Sigmoid colon (tissue), 7 donors: ENCODE measurements at regions of chr20 and their contacts with region 1.

Region 1: GRCh38 chr20:24651171-24651975 is 181.9 kb downstream of the SYNDIG1 start:
- DNase-seq: peak; percentile 38
- H3K4me3 ChIP-seq: no peak overlapping the region
- H3K27ac ChIP-seq: no peak overlapping the region
- H3K4me1 ChIP-seq: peaks cover 0 to 9% (median 0%) of the 10 kb centered on the region in 4 donors
- H3K27me3 ChIP-seq: no peaks in the 10 kb centered on the region
- CTCF ChIP-seq: no peak
- EP300 ChIP-seq: no peak
- POLR2A ChIP-seq: no peak

Region 2: GRCh38 chr20:24337069-24337468 is 314.3 kb before region 1 on chr20:
- intact Hi-C with region 1: no loop called
- DNase-seq: no peak
- H3K4me3 ChIP-seq: no peak overlapping the region
- H3K27ac ChIP-seq: no peak overlapping the region
- H3K4me1 ChIP-seq: no peaks in the 10 kb centered on the region
- H3K27me3 ChIP-seq: no peaks in the 10 kb centered on the region
- CTCF ChIP-seq: no peak
- EP300 ChIP-seq: no peak
- POLR2A ChIP-seq: no peak

Region 3: DNA sequence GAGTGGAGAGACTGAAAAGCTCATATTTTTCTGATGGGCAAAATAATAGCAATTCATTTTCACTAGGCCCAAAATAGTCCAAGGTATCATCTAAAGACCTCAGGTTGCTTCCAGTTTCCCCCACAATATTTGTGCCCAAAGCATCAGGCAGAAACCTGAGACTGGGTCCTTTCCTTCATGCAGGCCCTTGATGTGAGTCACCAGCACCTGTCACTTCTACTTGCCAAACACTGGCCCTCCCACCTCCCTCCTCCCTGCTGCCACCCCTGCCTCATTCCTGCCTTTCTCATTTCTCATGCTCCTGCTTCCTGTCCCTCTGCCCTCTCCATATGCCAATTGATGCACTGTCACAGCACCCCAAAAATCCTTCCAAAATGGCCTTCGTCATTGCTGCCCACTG is 67.3 kb after region 1 on chr20:
- intact Hi-C with region 1: loop called (anchors 10 kb)
- DNase-seq: no peak
- H3K4me3 ChIP-seq: no peak overlapping the region
- H3K27ac ChIP-seq: no peak overlapping the region
- H3K4me1 ChIP-seq: peaks cover 0 to 14% (median 0%) of the 10 kb centered on the region in 4 donors
- H3K27me3 ChIP-seq: no peaks in the 10 kb centered on the region
- CTCF ChIP-seq: no peak
- EP300 ChIP-seq: no peak
- POLR2A ChIP-seq: no peak

Region 4: DNA sequence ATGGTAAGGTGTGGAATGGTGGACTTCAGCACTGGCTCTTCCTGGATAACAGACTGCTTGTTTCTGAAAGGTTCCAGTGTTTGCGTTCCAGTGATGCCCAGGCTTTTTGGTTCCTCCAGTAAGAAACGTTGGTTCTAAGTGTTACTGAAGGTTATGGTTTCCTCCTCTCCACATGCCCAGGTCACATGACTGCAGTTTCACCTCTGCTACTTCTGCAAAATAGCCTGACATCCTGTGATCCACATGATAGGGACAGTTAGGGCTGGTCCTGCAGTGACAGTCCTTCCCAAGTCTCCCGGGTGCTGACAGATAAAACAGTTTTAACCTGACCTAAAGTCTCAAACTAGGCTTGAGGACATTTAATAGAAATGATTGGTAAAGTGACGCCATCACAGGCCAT is 165.5 kb after region 1 on chr20:
- intact Hi-C with region 1: no loop called
- DNase-seq: no peak
- H3K4me3 ChIP-seq: no peak overlapping the region
- H3K27ac ChIP-seq: no peak overlapping the region
- H3K4me1 ChIP-seq: no peaks in the 10 kb centered on the region
- H3K27me3 ChIP-seq: peaks cover 0 to 3% (median 0%) of the 10 kb centered on the region in 3 donors
- CTCF ChIP-seq: no peak
- EP300 ChIP-seq: no peak
- POLR2A ChIP-seq: no peak